HCT116 (cell line): ENCODE measurements at regions of chr4 and their contacts with region 1.

Region 1: GRCh38 chr4:153142700-153143438 is 61.4 kb upstream of the TRIM2 start:
- DNase-seq: peak; percentile 68
- ATAC-seq: peak; percentile 89
- H3K4me3 ChIP-seq: no peak overlapping the region; a peak in 1 of 4 replicates
- H3K27ac ChIP-seq: peak overlapping the region; percentile 0; the same call in 1 of the 2 replicates
- H3K4me1 ChIP-seq: peaks cover 13 to 15% of the 10 kb centered on the region in 2 experiments
- H3K27me3 ChIP-seq: no peaks in the 10 kb centered on the region
- CTCF ChIP-seq: peak; percentile 81 to 94 (median 91)
- POLR2A ChIP-seq: no peak
- RAD21 ChIP-seq: peak; percentile 96

Region 2: GRCh38 chr4:153127760-153128494 is 14.9 kb before region 1 on chr4:
- CTCF ChIA-PET with region 1: interaction called, 10 read pairs
- POLR2A ChIA-PET with region 1: no interaction called
- RAD21 ChIA-PET with region 1: no interaction called
- intact Hi-C with region 1: no loop called
- DNase-seq: peak; percentile 73
- ATAC-seq: peak; percentile 87
- H3K4me3 ChIP-seq: no peak overlapping the region
- H3K27ac ChIP-seq: no peak overlapping the region
- H3K4me1 ChIP-seq: peaks cover 0 to 5% of the 10 kb centered on the region in 2 experiments; a peak in 1 of 4 replicates
- H3K27me3 ChIP-seq: no peaks in the 10 kb centered on the region
- CTCF ChIP-seq: peak; percentile 68 to 91 (median 87)
- POLR2A ChIP-seq: no peak
- RAD21 ChIP-seq: peak; percentile 94

Region 3: GRCh38 chr4:153318696-153319320 is 175.9 kb after region 1 on chr4:
- CTCF ChIA-PET with region 1: interaction called, 13 read pairs
- POLR2A ChIA-PET with region 1: no interaction called
- RAD21 ChIA-PET with region 1: no interaction called
- intact Hi-C with region 1: loop called (anchors 1 kb)
- DNase-seq: peak; percentile 39
- ATAC-seq: peak; percentile 93
- H3K4me3 ChIP-seq: no peak overlapping the region
- H3K27ac ChIP-seq: no peak overlapping the region
- H3K4me1 ChIP-seq: no peaks in the 10 kb centered on the region
- H3K27me3 ChIP-seq: no peaks in the 10 kb centered on the region
- CTCF ChIP-seq: peak; percentile 68 to 85 (median 74); a peak in 5 of 6 replicates
- POLR2A ChIP-seq: no peak
- RAD21 ChIP-seq: peak; percentile 83

Region 4: DNA sequence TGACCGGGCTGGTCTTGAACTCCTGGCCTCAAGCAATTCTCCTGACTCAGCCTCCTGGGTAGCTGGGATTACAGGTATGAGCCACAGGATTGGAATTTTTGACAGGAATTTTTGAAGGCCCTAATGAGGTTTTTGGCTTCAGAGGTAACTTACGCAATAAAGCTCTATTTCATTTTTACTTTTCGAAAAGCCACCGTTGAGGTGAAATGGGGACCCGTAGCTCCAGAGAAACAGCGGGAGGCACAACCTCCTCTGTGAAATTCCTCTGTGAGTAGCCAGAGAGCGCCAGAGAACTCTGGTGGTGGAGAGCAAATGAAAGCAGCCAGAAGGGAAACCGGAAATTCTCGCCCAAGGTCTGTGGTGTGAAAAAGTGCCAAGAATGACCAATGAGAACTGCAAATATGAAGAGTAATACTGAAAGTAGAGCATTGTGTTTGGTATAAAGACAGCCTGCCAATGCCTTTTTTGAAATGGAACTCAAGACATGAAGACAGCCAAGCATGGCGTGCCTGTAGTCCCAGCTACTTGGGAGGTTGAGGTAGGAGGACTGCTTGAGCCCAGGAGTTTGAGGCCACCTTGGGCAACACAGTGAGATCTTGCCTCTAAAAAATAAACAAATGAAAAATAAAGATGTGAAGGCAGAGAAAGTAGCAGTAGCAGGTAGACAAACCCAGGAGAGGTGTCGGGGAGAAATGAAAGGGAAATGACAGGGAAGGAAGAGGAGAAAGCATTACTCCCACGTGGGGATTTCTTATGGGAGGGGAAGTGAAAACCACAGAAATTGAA is 290.3 kb after region 1 on chr4:
- CTCF ChIA-PET with region 1: interaction called, 4 read pairs
- POLR2A ChIA-PET with region 1: no interaction called
- RAD21 ChIA-PET with region 1: no interaction called
- intact Hi-C with region 1: loop called (anchors 1 kb)
- DNase-seq: peak; percentile 77
- ATAC-seq: peak; percentile 90
- H3K4me3 ChIP-seq: peak overlapping the region in 1 of 2 experiments; percentile 32; a peak in 2 of 4 replicates
- H3K27ac ChIP-seq: peak overlapping the region; percentile 44; the same call in 1 of the 2 replicates
- H3K4me1 ChIP-seq: peaks cover 14 to 19% of the 10 kb centered on the region in 2 experiments
- H3K27me3 ChIP-seq: no peaks in the 10 kb centered on the region
- CTCF ChIP-seq: peak; percentile 75 to 92 (median 85)
- POLR2A ChIP-seq: no peak
- RAD21 ChIP-seq: peak; percentile 98

Region 5: GRCh38 chr4:153643406-153644383 is 500.8 kb after region 1 on chr4:
- CTCF ChIA-PET with region 1: interaction called, 8 read pairs
- POLR2A ChIA-PET with region 1: no interaction called
- RAD21 ChIA-PET with region 1: no interaction called
- intact Hi-C with region 1: loop called (anchors 1 kb)
- DNase-seq: peak; percentile 46
- ATAC-seq: peak; percentile 90
- H3K4me3 ChIP-seq: no peak overlapping the region
- H3K27ac ChIP-seq: no peak overlapping the region
- H3K4me1 ChIP-seq: 0 out of 4 replicates have a peak, but pooled peaks cover 0 to 5% of the 10 kb centered on the region in 2 experiments
- H3K27me3 ChIP-seq: no peaks in the 10 kb centered on the region
- CTCF ChIP-seq: peak; percentile 32 to 71 (median 63); a peak in 5 of 6 replicates
- POLR2A ChIP-seq: no peak
- RAD21 ChIP-seq: peak; percentile 75